ENCODE measurements at regions of chr4 and their contacts with region 1.

Region 1: GRCh38 chr4:112327965-112328733 is 31.0 kb downstream of the ALPK1 start:
- ATAC-seq: peak; percentile 30 to 79 (median 66)
- H3K4me3 ChIP-seq: no peak overlapping the region
- H3K27ac ChIP-seq: no peak overlapping the region
- H3K4me1 ChIP-seq: peaks cover 9 to 15% of the 10 kb centered on the region in 2 donors

Region 2: GRCh38 chr4:111778543-111778942 is 549.6 kb before region 1 on chr4:
- in situ Hi-C with region 1: no loop called
- ATAC-seq: peak in 3 of 8 experiments; percentile 26 to 48 (median 35)
- H3K4me3 ChIP-seq: no peak overlapping the region
- H3K27ac ChIP-seq: no peak overlapping the region
- H3K4me1 ChIP-seq: no peaks in the 10 kb centered on the region

Region 3: DNA sequence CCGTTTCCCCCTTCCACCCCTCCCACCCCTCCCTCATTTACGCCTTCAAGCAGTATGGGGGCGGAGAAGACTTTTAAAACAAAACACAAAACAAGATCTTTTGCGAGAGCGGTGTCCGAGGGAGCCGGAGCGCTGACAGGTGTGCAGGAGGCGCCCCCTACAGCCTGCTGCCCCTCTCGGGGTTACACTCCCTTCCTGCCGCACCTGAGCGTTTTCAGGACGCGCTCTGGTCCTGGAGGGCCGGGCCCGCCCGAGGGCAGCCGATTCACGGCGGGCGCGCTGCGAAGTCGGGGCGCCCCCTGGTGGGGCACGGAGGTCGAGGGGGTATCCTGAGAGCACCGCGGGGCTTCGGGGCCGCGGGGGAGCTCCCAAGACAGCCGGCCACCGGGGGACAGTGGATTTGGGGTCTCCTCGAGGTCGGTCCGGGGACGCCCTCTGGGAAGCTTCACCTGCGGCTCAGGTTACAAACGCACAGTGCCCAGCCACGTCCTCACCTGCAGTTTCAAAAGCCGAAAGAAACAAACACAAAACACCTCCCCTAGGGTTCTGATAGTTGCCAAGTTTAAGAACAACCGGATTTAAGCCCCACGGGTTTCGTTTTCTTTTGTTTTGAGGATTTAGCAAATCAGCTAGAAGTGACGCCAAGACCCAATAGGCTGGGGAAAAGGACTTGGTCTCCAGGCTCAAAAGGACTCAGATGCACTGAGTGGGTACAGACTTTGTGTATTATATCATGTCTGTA is 195.8 kb after region 1 on chr4:
- in situ Hi-C with region 1: loop called in 7 of 9 experiments (anchors 25 kb)
- ATAC-seq: peak; percentile 38 to 90 (median 86)
- H3K4me3 ChIP-seq: peak overlapping the region; percentile 21 to 30 (median 27)
- H3K27ac ChIP-seq: no peak overlapping the region
- H3K4me1 ChIP-seq: peaks cover 21 to 23% of the 10 kb centered on the region in 2 donors

Region 4: GRCh38 chr4:112589206-112589605 is 261.1 kb after region 1 on chr4:
- in situ Hi-C with region 1: loop called in 1 of 9 experiments (anchors 25 kb)
- ATAC-seq: peak in 2 of 8 experiments; percentile 73 to 79
- H3K4me3 ChIP-seq: no peak overlapping the region
- H3K27ac ChIP-seq: no peak overlapping the region
- H3K4me1 ChIP-seq: no peaks in the 10 kb centered on the region

Region 5: GRCh38 chr4:112604589-112604988 is 276.4 kb after region 1 on chr4:
- in situ Hi-C with region 1: loop called in 7 of 9 experiments (anchors 10 to 25 kb)
- ATAC-seq: peak; percentile 74 to 96 (median 88)
- H3K4me3 ChIP-seq: no peak overlapping the region
- H3K27ac ChIP-seq: no peak overlapping the region
- H3K4me1 ChIP-seq: no peaks in the 10 kb centered on the region